ENCODE measurements at regions of chr9 and their contacts with region 1.

Region 1: GRCh38 chr9:129320575-129321263 is 142.7 kb upstream of the IER5L start:
- DNase-seq: peak; percentile 89
- H3K4me3 ChIP-seq: peak overlapping the region; percentile 40 to 62
- H3K27ac ChIP-seq: peak overlapping the region; percentile 85 to 95
- H3K4me1 ChIP-seq: peaks cover 20 to 39% of the 10 kb centered on the region in 2 experiments; a peak in 3 of 4 replicates
- H3K27me3 ChIP-seq: no peaks in the 10 kb centered on the region
- CTCF ChIP-seq: peak; percentile 33
- EP300 ChIP-seq: peak in 1 of 2 experiments; percentile 45; a peak in 2 of 4 replicates
- RAD21 ChIP-seq: peak; percentile 66

Region 2: GRCh38 chr9:129333953-129334724 is 13.4 kb after region 1 on chr9:
- CTCF ChIA-PET with region 1: interaction called, 12 read pairs
- POLR2A ChIA-PET with region 1: interaction called, 7 read pairs
- DNase-seq: peak; percentile 93
- H3K4me3 ChIP-seq: peak overlapping the region; percentile 3 to 43; a peak in 3 of 4 replicates
- H3K27ac ChIP-seq: peak overlapping the region; percentile 89 to 92
- H3K4me1 ChIP-seq: peaks cover 17 to 23% of the 10 kb centered on the region in 2 experiments; a peak in 3 of 4 replicates
- H3K27me3 ChIP-seq: no peaks in the 10 kb centered on the region
- CTCF ChIP-seq: no peak
- EP300 ChIP-seq: peak; percentile 87 to 92
- RAD21 ChIP-seq: peak; percentile 40

Region 3: DNA sequence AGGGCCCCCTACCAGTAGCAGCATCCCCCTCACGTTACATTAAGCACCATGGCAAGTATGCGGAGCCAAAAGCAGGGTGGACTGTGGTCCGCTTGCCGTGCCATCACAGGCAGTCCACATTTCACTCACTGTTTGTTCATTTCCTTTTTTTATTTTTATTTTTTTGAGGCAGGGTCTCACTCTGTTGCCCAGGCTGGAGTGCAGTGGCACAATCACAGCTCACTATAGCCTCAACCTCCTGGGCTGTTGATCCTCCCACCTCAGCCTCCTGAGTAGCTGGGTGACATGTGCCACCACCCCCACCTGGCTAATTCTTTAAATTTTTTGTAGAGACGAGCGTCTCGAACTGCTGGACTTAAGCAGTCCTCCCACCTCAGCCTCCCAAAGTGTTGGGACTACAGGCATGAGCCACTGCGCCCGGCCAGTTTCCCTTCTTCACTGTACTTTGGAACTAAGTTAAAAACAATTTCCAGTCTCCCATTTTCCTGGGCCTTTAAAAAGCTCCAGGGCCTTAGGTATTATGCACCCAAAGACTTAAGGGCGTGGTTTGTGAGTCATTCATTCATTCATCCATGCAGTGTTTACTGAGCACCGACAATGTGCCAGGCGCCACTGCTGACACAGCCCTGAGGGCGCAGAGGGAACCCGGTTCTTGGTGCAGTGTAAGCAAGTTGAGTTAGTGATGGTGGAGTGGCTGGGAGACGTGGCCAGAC is 364.7 kb after region 1 on chr9:
- CTCF ChIA-PET with region 1: no interaction called
- POLR2A ChIA-PET with region 1: no interaction called
- DNase-seq: no peak
- H3K4me3 ChIP-seq: no peak overlapping the region
- H3K27ac ChIP-seq: no peak overlapping the region
- H3K4me1 ChIP-seq: no peaks in the 10 kb centered on the region
- H3K27me3 ChIP-seq: no peaks in the 10 kb centered on the region
- CTCF ChIP-seq: no peak
- EP300 ChIP-seq: no peak
- RAD21 ChIP-seq: no peak